Thyroid gland (tissue), 4 donors: ENCODE measurements at regions of chr1 and their contacts with region 1.

Region 1: GRCh38 chr1:117284399-117285215 is 73.9 kb upstream of the VTCN1 start:
- DNase-seq: no peak
- H3K4me3 ChIP-seq: no peak overlapping the region
- H3K27ac ChIP-seq: no peak overlapping the region
- H3K4me1 ChIP-seq: no peaks in the 10 kb centered on the region
- H3K27me3 ChIP-seq: no peaks in the 10 kb centered on the region
- CTCF ChIP-seq: peak in 5 of 6 experiments; percentile 30 to 87 (median 67)
- POLR2A ChIP-seq: no peak

Region 2: DNA sequence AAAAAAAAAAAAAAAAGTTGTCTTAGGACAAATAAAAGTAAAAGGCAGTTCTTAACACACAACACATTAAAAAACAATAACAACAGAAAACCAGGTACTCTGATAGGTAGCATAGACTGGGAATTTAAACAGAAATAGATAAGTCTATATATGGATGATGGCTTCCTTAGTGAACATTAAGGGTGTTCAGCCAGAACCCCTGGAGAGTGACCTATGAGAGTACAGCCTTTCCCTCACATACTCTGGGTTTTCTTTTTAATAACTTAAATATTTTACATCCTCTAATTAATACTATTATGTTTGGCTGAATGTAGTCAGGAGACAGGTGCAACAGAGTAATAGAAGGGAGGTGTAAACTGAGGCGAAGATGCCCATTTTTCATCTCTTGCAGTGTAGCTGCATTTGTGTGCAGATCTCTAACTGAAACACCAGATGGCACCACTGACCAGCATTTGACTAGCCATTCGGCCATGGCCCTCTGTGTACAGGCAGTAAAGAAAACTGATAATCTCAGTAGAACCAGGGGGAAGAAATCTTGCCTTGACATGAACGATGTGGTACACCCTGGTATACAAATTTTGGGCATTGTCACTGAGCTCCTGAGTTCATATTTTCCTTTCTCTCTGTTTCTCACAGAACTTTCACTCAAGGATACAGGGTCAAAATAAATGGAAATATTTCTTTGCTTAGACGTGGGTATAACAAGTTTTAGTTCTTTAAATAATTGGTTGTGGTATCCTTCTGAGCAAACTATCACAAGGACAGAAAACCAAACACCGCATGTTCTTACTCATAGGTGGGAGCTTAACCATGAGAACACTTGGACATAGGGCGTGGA is 216.9 kb before region 1 on chr1:
- intact Hi-C with region 1: loop called (anchors 5 kb)
- DNase-seq: peak; percentile 52 to 66
- H3K4me3 ChIP-seq: no peak overlapping the region
- H3K27ac ChIP-seq: no peak overlapping the region
- H3K4me1 ChIP-seq: no peaks in the 10 kb centered on the region
- H3K27me3 ChIP-seq: no peaks in the 10 kb centered on the region
- CTCF ChIP-seq: peak; percentile 16 to 93 (median 80)
- POLR2A ChIP-seq: no peak

Region 3: GRCh38 chr1:117121776-117122697 is 162.6 kb before region 1 on chr1:
- intact Hi-C with region 1: loop called (anchors 10 kb)
- DNase-seq: peak; percentile 98
- H3K4me3 ChIP-seq: peak overlapping the region; percentile 18 to 80 (median 59)
- H3K27ac ChIP-seq: peak overlapping the region; percentile 84 to 94 (median 87)
- H3K4me1 ChIP-seq: peaks cover 9 to 11% of the 10 kb centered on the region in 2 donors
- H3K27me3 ChIP-seq: no peaks in the 10 kb centered on the region
- CTCF ChIP-seq: peak; percentile 38 to 82 (median 70)
- POLR2A ChIP-seq: peak in 1 of 2 donors; percentile 45

Region 4: GRCh38 chr1:117166076-117166475 is 118.5 kb before region 1 on chr1:
- intact Hi-C with region 1: no loop called
- DNase-seq: no peak
- H3K4me3 ChIP-seq: no peak overlapping the region
- H3K27ac ChIP-seq: no peak overlapping the region
- H3K4me1 ChIP-seq: no peaks in the 10 kb centered on the region
- H3K27me3 ChIP-seq: no peaks in the 10 kb centered on the region
- CTCF ChIP-seq: no peak
- POLR2A ChIP-seq: no peak

Region 5: DNA sequence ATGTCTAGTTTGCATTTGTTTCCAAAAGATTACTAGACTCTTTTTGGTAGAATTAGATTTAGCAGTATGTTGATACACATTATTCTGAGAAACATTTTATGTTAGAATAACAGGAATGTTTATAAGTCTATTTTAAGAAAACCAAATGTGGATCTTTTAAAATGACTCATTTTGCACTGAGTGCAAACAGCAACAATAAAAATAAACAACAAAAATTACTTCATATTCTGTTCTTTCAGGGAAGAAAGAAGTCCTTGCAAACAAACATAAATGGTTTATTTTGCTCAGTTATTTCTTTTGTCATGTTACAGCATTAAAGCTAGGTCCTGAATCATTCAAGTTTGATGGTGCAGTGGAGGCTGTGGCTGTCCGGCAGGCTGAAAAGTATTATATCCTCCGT is 214.5 kb after region 1 on chr1:
- intact Hi-C with region 1: no loop called
- DNase-seq: no peak
- H3K4me3 ChIP-seq: no peak overlapping the region
- H3K27ac ChIP-seq: no peak overlapping the region
- H3K4me1 ChIP-seq: no peaks in the 10 kb centered on the region
- H3K27me3 ChIP-seq: no peaks in the 10 kb centered on the region
- CTCF ChIP-seq: no peak
- POLR2A ChIP-seq: no peak